Head of caudate nucleus (tissue), 42 donors: ENCODE measurements at regions of chr9 and their contacts with region 1.

Region 1: DNA sequence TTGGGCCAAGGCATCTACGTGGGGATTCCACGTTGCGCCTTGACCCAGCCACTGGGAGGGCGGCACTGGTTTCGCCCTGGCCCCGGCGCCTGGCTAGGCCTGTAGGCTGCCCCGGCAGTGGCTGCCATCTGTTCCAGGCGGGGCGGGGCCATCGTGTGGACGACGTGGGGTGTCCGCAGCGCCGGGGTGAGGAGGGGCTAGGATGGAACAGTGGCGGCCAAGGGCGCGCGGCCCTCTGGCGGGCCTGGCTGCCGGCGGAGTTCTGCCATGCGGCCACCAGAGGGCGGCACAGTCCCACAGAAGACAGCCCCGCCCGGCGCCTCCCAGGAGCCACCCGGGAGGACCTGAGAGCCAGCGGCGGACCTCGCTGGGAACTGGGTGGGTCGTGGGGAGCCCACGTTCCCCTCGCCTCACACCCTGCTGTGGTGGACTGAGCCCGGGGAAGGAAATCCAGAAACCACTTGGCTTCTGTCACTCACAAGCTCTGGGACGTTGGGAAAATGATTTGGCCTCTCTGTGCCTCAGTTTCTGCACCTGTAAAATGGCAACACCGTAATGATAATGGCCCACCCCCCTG is 22.6 kb upstream of the RAPGEF1 start:
- DNase-seq: peak; percentile 30 to 90 (median 78)

Region 2: DNA sequence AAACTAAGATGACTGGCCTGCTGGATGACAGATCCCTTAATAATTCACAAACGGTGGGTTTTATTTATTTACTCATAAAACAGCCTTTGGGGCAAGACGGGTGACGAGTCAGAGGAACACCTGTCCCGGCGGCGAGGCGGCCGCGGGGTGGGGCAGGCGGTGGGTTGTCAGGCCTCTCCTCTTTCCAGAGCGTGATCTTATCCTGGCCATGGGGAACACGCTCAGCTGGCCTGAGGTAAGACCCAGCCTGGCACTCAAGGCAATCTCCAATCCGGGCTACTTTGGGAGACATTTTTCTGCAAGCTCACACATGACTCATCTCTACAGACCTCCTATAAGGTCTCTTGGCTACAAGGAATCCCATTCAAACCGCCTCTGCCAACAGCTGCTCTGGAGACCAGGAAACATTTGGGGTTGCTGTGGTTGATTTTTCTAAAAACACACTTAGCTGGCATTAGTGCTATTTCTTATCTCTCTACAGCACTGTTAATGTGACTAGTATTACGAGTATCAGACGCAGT is 28.8 kb before region 1 on chr9:
- intact Hi-C with region 1: no loop called
- DNase-seq: no peak

Region 3: GRCh38 chr9:132018957-132019405 is 256.5 kb after region 1 on chr9:
- intact Hi-C with region 1: no loop called
- DNase-seq: peak in 35 of 42 donors; percentile 9 to 80 (median 53)

Region 4: GRCh38 chr9:132169672-132170392 is 407.4 kb after region 1 on chr9:
- intact Hi-C with region 1: loop called (anchors 10 kb)
- DNase-seq: peak in 41 of 42 donors; percentile 49 to 90 (median 76)

Region 5: GRCh38 chr9:132250324-132251262 is 488.1 kb after region 1 on chr9:
- intact Hi-C with region 1: loop called (anchors 5 kb)
- DNase-seq: no peak

Region 6: DNA sequence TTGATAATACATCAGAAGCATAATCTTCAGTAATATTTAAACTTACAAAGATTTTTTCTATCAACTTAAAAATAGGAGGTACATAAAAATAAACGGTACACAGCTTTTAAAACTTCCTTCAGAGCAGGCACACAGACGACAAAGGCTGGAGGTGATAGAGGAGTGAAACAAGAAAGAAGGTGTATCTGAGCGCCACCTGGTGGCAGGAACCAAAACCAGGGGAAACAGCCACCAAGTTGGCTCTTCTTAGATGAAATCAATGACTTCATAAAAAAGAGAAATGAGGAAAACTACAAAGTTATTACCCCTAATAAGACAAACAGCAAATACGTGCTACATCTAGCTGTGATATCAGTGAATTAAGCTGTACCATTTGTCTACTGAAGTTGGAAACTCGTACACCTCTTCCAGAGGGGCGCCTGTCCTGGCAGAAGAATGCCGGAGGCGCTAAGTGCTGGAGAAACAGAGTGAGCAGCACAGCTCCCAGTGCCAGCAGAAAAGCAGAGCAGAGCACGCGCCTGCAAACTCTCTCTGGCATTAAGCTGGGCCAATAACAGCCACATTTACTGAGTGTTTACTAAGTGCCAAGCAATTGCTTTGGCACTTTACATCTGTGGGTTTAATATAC is 506.4 kb after region 1 on chr9:
- intact Hi-C with region 1: loop called (anchors 5 kb)
- DNase-seq: peak; percentile 53 to 92 (median 80)